Left cardiac atrium (tissue), 4 donors: ENCODE measurements at regions of chr3 and their contacts with region 1.

Region 1: DNA sequence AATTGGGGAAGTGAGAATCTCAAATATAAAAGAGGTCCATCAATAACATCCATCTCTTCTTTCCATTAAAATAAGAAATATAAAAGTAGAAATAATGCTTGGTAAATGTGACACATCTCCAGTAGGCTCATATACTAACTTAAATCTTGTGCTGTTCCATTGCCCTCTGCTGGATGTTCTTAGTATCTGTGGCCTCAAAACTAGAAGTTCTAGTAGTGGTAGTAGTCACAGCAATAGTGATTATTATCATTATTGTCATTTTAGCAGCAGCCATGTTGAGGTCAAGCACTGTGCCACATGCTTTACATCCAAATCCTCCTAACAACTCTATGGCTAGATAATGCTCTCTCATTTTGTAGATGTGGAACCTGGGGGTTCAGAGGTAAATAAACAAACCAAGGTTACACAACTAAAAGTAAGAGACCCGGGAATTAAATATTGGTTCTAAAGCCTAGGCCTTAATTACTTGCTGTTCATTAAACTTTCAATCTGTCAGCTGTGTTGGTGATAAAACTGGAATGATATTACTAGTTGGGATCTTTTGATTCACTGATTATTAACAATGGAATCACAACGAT is 20.2 kb upstream of the BTLA start:
- DNase-seq: no peak
- ATAC-seq: peak; percentile 83 to 89

Region 2: GRCh38 chr3:112293368-112294321 is 225.9 kb before region 1 on chr3 and contains the start of gene SLC9C1:
- intact Hi-C with region 1: loop called in 1 of 2 experiments (anchors 2 kb)
- DNase-seq: peak; percentile 29
- ATAC-seq: peak; percentile 89 to 94
- total RNA-seq, gene SLC9C1: 0.26 to 1.4 TPM

Region 3: GRCh38 chr3:112327371-112327951 is 192.1 kb before region 1 on chr3:
- intact Hi-C with region 1: loop called in 1 of 2 experiments (anchors 10 kb)
- DNase-seq: no peak
- ATAC-seq: peak; percentile 88 to 93